ENCODE measurements at regions of chr19 and their contacts with region 1.

Region 1: DNA sequence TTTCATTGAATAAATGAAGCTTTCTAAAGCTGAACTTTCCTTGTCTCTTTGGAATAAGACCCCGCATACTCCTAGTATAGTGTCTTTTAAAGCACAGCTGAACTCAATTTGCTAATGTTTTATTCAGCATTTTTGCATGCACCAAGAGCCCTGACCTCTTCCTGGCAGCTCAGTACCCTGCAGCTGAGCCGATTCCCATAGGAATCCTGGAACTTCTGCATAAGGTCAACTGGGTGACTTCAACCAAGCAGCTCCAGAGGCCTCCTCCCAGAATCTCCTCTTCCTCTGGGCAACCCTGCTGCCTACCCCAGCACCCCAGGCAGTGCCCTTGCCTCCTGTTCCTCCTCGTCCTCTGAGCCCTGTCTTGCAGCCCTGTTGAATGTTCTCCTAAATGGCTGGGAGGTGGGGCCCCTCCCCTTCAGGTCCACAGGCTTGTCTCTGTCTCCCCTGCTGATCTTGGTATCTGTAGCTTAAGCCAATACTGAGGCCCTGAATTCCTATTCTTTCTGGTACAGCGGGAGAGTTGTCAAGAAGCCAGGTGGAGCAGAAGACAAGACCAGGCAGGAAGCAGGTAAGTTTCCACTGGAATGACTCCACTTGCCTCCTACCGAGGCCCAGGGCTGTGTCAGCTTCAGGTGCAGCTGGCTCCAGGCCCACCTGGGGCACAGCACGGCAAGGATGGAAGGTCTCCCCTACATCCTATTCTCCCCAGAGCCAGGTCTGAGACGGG is 23.6 kb upstream of the CCDC124 start:
- DNase-seq: no peak
- ATAC-seq: no peak

Region 2: DNA sequence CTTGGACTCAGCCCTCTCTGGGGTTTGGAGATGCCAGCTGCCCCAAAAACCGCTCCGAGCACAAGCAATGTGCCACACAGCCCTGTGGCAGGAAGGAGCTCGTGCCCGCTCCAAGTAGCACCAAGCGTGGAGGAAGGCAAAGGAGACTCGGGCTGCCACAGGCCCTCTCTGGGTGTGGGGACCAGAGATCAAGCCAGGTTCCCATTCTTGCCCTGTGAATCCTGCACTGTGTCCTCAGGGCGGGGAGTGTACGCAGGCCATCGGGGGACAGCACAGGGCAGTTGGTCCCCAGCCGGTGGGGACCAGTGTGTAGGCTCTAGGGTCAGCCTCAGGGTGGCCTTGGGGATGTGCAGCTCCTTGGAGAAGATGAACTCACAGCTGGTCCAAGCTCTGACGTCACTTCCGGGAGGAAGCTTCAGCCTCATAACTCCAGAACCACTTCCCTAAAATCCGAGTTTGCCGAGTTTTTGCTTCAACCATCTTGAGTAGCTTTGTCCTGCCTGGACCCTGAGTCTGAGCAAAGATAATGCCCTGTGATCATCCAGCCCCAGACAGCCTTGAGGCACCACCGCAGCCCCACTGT is 873.2 kb before region 1 on chr19:
- intact Hi-C with region 1: loop called (anchors 5 kb)
- DNase-seq: no peak
- ATAC-seq: peak; percentile 38